T-cell (primary cell): ENCODE measurements at regions of chr7 and their contacts with region 1.

Region 1: DNA sequence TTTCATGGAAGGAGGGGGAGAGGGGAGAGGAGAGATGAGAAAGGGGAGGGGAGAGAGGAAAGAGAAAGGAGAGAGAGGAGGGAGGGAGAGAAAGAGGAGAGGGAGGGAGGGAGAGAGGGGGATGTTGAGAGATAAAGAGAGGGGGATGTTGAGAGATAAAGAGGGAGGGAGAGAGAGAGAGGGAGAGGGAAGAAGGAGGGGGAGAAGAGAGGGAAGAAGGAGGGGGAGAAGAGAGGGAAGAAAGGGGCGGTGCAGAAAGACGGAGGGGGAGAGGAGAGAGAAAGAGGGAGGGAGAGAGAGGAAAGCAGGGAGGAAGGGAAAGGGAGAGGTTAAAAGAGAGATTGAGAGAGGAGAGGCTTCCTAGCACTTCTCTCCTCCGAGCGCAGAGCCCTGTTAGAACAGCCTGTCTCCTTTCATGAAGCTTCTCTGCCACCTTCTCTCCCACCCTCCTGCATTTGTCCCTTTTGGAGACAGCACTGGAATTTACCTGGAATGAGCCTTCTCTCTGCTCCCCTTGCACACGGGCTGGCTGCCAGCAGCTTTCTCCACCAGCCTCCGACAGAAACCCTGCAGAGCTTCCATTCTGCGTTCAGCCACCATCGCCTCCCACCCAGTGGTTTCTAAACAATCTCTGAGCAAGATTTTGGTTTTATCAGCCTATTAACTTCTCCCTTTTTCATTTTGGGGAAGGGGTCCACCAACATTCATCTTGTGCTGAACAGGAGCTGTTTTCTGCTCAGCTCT is 74.0 kb upstream of the CARD11 start:
- DNase-seq: peak in 20 of 35 experiments; percentile 16 to 56 (median 30)
- ATAC-seq: peak in 2 of 4 experiments; percentile 62 to 67
- H3K4me3 ChIP-seq: peak overlapping the region; percentile 37 to 58
- H3K4me3 Mint-ChIP-seq: peak overlapping the region in 2 of 3 donors; percentile 75 to 85
- H3K27ac ChIP-seq: peak overlapping the region; percentile 30
- H3K27ac Mint-ChIP-seq: peak overlapping the region in 1 of 2 donors; percentile 95
- H3K4me1 ChIP-seq: peaks cover 0 to 16% of the 10 kb centered on the region in 2 experiments
- H3K4me1 Mint-ChIP-seq: peaks cover 37 to 62% (median 58%) of the 10 kb centered on the region in 3 donors
- H3K27me3 ChIP-seq: no peaks in the 10 kb centered on the region
- H3K27me3 Mint-ChIP-seq: peaks cover 0 to 2% of the 10 kb centered on the region in 2 donors

Region 2: GRCh38 chr7:3197567-3198213 is 80.0 kb after region 1 on chr7:
- CTCF ChIA-PET with region 1: interaction called in 1 of 2 experiments, 10 read pairs
- POLR2A ChIA-PET with region 1: no interaction called
- DNase-seq: no peak
- ATAC-seq: no peak
- H3K4me3 ChIP-seq: no peak overlapping the region
- H3K4me3 Mint-ChIP-seq: no peak overlapping the region
- H3K27ac ChIP-seq: no peak overlapping the region
- H3K27ac Mint-ChIP-seq: no peak overlapping the region
- H3K4me1 ChIP-seq: no peaks in the 10 kb centered on the region
- H3K4me1 Mint-ChIP-seq: no peaks in the 10 kb centered on the region
- H3K27me3 ChIP-seq: peaks cover 0 to 17% of the 10 kb centered on the region in 2 experiments
- H3K27me3 Mint-ChIP-seq: peaks cover 0 to 4% of the 10 kb centered on the region in 2 donors